AG04450 (cell line): ENCODE measurements at regions of chr11 and their contacts with region 1.

Region 1: DNA sequence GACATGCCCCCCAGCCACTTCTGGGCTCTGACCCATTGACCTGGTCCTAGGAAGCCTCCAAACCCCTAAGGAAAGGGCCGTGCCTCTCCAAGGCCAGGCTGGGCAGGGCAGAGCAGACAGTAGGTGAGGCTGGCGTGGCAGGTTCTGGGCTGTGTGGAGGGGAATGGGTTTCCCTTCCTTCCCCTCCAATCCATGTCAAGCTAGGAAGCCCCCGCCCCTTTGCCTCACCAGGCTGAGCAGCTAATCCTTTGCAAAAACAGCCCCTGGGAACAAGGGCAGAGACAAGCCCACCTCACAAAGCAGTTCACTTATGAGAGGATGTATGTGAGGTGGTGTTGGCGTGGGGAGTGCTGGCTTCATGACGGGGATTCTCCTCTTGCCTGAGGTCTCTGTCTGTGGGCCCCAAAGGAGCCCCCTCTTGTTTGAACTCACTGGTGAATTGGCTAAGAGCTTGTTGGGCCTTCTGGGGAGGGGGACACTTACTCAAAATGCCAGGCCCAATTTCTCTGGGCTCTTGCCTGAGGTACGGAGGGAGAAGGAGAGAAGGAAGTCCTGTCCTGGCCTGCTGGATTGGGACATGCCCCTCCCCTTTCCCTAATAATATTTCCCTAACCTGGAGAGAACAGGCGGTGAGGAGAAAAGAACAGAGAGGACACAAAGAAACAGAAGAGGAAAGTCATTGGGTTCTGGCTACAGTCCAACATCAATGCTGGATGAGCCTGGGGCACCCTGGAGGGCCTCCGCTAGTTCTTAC is 1.6 kb upstream of the TRIM29 start:
- DNase-seq: no peak
- H3K4me3 ChIP-seq: no peak overlapping the region
- H3K27ac ChIP-seq: no peak overlapping the region
- H3K27me3 ChIP-seq: peaks cover 42% of the 10 kb centered on the region
- CTCF ChIP-seq: no peak

Region 2: DNA sequence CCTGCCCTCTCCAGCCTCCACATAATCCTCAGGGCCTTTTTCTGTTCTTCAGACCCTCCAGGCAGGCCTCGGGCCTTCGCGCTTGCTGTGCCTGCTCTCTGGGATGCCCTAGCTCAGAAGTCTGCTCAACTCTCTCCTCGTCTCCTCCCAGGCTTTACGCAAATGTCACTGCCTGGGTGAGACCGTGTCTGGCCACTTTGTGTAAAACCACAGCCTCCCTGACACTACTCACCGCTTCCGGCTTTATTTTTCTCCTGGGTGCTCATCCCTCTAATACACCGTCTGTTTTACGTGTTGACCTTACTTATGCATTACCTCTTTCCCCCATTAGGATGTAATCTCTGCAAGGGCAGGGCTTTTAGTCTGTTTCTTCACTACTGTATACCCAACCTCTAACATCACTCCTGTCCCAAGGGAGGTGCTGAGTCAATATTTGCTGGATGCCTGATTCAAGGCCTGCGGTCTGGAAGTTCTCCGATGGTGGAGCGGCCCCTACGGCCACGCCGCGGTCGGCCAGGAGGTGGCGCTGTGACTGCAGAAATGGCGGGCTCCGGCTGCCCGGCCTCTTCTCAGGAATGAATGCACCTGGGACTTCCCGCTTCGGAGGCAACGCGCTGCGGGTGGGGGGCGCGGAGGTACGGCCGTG is 658.3 kb before region 1 on chr11:
- CTCF ChIA-PET with region 1: interaction called, 11 read pairs
- POLR2A ChIA-PET with region 1: no interaction called
- DNase-seq: peak; percentile 65
- H3K4me3 ChIP-seq: no peak overlapping the region
- H3K27ac ChIP-seq: no peak overlapping the region
- H3K27me3 ChIP-seq: peaks cover 37% of the 10 kb centered on the region
- CTCF ChIP-seq: peak; percentile 96